CD4-positive, alpha-beta T cell (primary cell): ENCODE measurements at regions of chr5 and their contacts with region 1.

Region 1: DNA sequence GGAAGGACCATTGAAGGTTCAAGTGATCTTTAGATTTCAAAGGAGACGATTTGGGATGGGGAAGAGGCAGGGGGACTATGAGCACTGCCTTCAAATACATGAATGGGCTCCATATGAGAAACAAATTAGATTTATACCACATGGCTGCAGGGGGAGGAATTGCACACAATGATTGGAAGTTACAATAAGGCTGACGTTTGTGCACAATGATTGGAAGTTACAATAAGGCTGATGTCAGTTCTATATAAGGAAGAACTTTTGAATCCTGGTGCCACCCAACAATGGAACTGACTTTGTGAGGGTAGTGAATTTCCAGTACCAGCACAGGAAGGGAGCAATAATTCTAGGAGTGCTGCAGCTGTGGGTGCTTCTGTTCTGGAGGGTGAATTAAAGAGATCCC is 95.7 kb upstream of the PTGER4 start:
- DNase-seq: no peak
- ATAC-seq: no peak
- H3K4me3 ChIP-seq: no peak overlapping the region
- H3K4me3 Mint-ChIP-seq: no peak overlapping the region
- H3K27ac ChIP-seq: no peak overlapping the region
- H3K27ac Mint-ChIP-seq: no peak overlapping the region
- H3K4me1 ChIP-seq: no peaks in the 10 kb centered on the region
- H3K4me1 Mint-ChIP-seq: peaks cover 11% of the 10 kb centered on the region
- H3K27me3 ChIP-seq: no peaks in the 10 kb centered on the region
- H3K27me3 Mint-ChIP-seq: no peaks in the 10 kb centered on the region
- CTCF ChIP-seq: no peak

Region 2: GRCh38 chr5:40570408-40571129 is 13.5 kb before region 1 on chr5:
- CTCF ChIA-PET with region 1: no interaction called
- POLR2A ChIA-PET with region 1: no interaction called
- intact Hi-C with region 1: loop called in 1 of 2 experiments (anchors 1 kb)
- DNase-seq: peak in 1 of 14 experiments; percentile 35
- ATAC-seq: no peak
- H3K4me3 ChIP-seq: no peak overlapping the region
- H3K4me3 Mint-ChIP-seq: no peak overlapping the region
- H3K27ac ChIP-seq: no peak overlapping the region
- H3K27ac Mint-ChIP-seq: no peak overlapping the region
- H3K4me1 ChIP-seq: no peaks in the 10 kb centered on the region
- H3K4me1 Mint-ChIP-seq: peaks cover 2% of the 10 kb centered on the region
- H3K27me3 ChIP-seq: no peaks in the 10 kb centered on the region
- H3K27me3 Mint-ChIP-seq: no peaks in the 10 kb centered on the region
- CTCF ChIP-seq: no peak

Region 3: DNA sequence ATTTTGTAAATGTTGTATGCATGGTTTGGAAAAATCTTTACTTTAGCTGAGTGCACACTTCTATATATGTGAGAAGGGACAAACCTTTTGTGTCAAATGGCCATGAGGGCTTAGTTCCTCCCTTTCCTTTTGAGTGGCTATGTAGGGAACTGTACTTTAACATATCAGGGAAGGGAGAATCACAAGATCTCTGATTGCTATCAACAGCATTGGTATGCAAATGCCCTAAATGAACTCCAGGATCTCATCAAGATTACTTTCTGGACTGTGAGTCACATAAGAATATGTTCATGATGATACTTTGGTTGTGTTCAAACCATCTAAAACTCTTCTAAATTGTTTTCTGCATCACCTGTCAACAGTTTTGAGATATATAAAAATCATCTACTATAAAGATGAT is 518.3 kb after region 1 on chr5:
- CTCF ChIA-PET with region 1: no interaction called
- POLR2A ChIA-PET with region 1: no interaction called
- intact Hi-C with region 1: no loop called
- DNase-seq: no peak
- ATAC-seq: no peak
- H3K4me3 ChIP-seq: no peak overlapping the region
- H3K4me3 Mint-ChIP-seq: no peak overlapping the region
- H3K27ac ChIP-seq: no peak overlapping the region
- H3K27ac Mint-ChIP-seq: no peak overlapping the region
- H3K4me1 ChIP-seq: no peaks in the 10 kb centered on the region
- H3K4me1 Mint-ChIP-seq: no peaks in the 10 kb centered on the region
- H3K27me3 ChIP-seq: no peaks in the 10 kb centered on the region
- H3K27me3 Mint-ChIP-seq: no peaks in the 10 kb centered on the region
- CTCF ChIP-seq: no peak